ENCODE measurements at regions of chr2 and their contacts with region 1.

Region 1: GRCh38 chr2:177164584-177165052 is 48.0 kb upstream of the HNRNPA3 start:
- DNase-seq: peak; percentile 70 to 88 (median 84)
- ATAC-seq: peak; percentile 85 to 93 (median 91)
- H3K4me3 ChIP-seq: peak overlapping the region in 3 of 4 donors; percentile 1 to 35 (median 31)
- H3K27ac ChIP-seq: peak overlapping the region; percentile 31 to 77 (median 56)
- H3K4me1 ChIP-seq: peaks cover 8 to 15% (median 14%) of the 10 kb centered on the region in 3 donors
- H3K27me3 ChIP-seq: no peaks in the 10 kb centered on the region
- CTCF ChIP-seq: peak; percentile 93 to 99 (median 98)

Region 2: GRCh38 chr2:177263451-177264208 is 99.0 kb after region 1 on chr2:
- intact Hi-C with region 1: loop called in 1 of 3 experiments (anchors 10 kb)
- DNase-seq: peak; percentile 97 to 99 (median 98)
- ATAC-seq: peak; percentile 71 to 86 (median 78)
- H3K4me3 ChIP-seq: peak overlapping the region; percentile 85 to 99 (median 95)
- H3K27ac ChIP-seq: peak overlapping the region; percentile 97 to 100 (median 100)
- H3K4me1 ChIP-seq: peaks cover 27 to 39% (median 29%) of the 10 kb centered on the region in 3 donors
- H3K27me3 ChIP-seq: no peaks in the 10 kb centered on the region
- CTCF ChIP-seq: peak; percentile 59 to 85 (median 80)

Region 3: GRCh38 chr2:177296040-177296439 is 131.4 kb after region 1 on chr2:
- intact Hi-C with region 1: loop called in 1 of 3 experiments (anchors 10 kb)
- DNase-seq: no peak
- ATAC-seq: peak in 3 of 4 donors; percentile 61 to 73 (median 68)
- H3K4me3 ChIP-seq: no peak overlapping the region
- H3K27ac ChIP-seq: no peak overlapping the region
- H3K4me1 ChIP-seq: no peaks in the 10 kb centered on the region
- H3K27me3 ChIP-seq: no peaks in the 10 kb centered on the region
- CTCF ChIP-seq: peak in 1 of 4 donors; percentile 19

Region 4: DNA sequence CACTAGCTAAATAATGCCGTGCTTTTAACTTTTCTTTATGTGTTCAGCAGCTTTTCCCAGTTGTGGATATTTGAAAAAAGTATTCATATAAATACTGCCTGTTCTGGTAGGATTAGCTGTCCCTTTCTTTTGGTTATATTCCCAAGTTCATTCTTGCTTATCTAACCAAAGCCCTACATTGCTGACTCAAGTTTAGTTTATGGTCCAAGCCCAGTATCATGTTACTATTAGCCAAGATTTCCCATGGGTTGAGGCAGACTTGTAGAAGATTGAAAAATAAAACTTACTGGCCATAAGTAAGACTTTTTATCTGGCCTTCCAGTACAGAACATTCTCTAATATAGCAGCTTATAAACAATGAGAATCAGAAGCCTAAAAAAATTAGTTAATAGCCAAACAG is 149.6 kb after region 1 on chr2:
- intact Hi-C with region 1: no loop called
- DNase-seq: no peak
- ATAC-seq: peak; percentile 43 to 84 (median 66)
- H3K4me3 ChIP-seq: no peak overlapping the region
- H3K27ac ChIP-seq: no peak overlapping the region
- H3K4me1 ChIP-seq: peaks cover 0 to 14% (median 7%) of the 10 kb centered on the region in 3 donors
- H3K27me3 ChIP-seq: no peaks in the 10 kb centered on the region
- CTCF ChIP-seq: no peak

Region 5: DNA sequence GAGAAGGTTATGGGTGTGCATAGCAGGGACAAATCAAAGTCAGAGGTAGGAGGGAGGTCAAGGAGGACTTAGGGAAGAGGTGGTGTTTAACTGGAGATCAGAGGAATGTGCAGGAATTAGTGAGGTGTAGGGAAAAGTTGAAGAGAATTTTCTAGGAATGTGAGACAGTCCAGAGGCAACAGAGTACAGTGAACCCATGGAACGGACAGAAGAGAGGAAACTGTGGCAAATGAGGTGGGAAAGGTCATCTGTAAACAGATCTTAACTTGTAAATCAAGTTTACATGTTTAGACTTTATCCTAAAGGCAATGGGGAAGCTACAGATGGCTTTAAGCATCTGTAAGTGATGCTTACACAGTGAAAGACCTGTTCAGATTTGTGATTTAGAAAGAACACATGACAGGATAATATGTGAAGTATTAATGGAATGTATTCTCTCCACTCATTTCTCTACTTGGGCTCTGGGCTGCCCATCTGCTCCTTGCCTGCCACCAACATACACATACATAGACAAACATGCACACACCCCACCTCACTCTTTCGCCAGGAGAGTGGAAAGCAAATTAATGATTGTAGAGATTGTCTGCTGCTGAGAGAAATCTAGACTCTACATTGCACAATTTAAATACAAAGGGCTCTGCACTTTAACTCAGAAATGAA is 160.8 kb after region 1 on chr2:
- intact Hi-C with region 1: loop called in 1 of 3 experiments (anchors 5 kb)
- DNase-seq: no peak
- ATAC-seq: peak in 2 of 4 donors; percentile 9 to 17
- H3K4me3 ChIP-seq: no peak overlapping the region
- H3K27ac ChIP-seq: no peak overlapping the region
- H3K4me1 ChIP-seq: peaks cover 0 to 4% (median 0%) of the 10 kb centered on the region in 3 donors
- H3K27me3 ChIP-seq: no peaks in the 10 kb centered on the region
- CTCF ChIP-seq: no peak

Measured in pancreas (tissue), 10 donors.